ENCODE measurements at regions of chr13 and their contacts with region 1.

Region 1: GRCh38 chr13:77595166-77595810 is 59.8 kb downstream of the SCEL start:
- DNase-seq: no peak
- H3K4me3 Mint-ChIP-seq: no peak overlapping the region
- H3K27ac Mint-ChIP-seq: no peak overlapping the region
- H3K4me1 Mint-ChIP-seq: no peaks in the 10 kb centered on the region
- H3K27me3 Mint-ChIP-seq: peaks cover 20% of the 10 kb centered on the region
- CTCF ChIP-seq: no peak

Region 2: DNA sequence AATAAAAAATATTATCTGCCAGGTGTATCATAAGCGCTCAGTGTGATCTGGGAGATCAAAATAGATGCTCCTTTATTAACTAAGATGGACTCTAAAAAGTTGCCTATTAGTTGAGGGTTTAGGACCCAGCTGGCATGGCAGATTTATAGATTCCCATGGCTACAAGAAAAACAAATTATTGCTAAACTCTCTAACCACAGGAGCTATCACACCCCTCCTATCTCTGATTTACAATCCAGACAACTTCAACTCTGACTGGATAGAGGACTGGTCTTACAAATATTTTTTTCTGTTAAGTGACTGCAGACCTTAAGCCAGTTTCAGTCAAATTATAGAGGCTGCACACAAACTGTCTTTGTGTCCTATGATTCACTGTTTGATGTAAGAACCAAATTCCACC is 223.0 kb before region 1 on chr13:
- CTCF ChIA-PET with region 1: no interaction called
- POLR2A ChIA-PET with region 1: no interaction called
- intact Hi-C with region 1: no loop called
- DNase-seq: no peak
- H3K4me3 Mint-ChIP-seq: no peak overlapping the region
- H3K27ac Mint-ChIP-seq: no peak overlapping the region
- H3K4me1 Mint-ChIP-seq: no peaks in the 10 kb centered on the region
- H3K27me3 Mint-ChIP-seq: peaks cover 73% of the 10 kb centered on the region
- CTCF ChIP-seq: no peak

Region 3: DNA sequence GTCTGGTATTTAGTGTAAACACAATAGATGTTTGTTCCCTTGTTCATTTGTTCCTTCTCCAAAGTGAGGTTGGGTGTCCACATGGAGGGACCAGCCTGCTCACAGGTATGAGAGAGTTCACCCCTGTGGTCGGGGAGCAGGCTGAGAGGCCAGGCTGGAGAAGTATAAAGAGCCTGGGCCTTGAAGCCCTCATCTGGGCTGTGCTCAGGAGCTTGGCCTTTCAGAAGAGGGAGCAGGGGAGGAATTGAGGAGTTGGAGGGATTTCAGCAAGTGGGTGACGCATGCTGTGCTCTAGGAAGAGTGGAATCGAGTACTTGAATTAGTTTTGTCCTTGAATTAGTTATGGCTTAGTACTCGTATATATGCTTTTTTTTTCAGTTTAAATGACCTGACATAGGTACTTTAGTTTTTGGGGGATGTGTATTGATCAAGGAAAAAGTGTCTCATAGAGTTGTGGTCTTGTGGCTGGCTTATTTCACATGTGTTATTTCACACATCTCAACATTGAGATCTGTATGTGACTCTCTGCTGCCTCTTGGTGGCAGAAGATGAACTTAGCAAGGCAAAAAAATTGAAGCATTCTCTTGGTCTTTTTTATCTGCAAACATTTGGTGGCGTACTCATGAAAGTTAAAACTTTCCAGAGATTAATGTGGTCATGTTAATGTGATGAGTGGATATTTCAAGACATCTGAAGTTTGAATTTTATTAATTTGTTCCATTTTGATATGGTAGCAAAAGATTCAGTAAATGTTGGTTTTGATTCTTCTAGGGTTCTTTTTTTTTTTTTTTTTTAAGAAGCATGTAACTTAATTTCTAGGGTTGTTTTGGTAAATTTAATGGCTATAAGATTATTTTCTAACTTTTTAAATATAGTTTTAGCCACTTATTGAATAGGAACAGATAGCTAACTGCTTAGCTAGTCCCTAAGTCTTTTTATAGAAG is 156.5 kb after region 1 on chr13:
- CTCF ChIA-PET with region 1: interaction called, 20 read pairs
- POLR2A ChIA-PET with region 1: interaction called, 6 read pairs
- intact Hi-C with region 1: loop called (anchors 1 kb)
- DNase-seq: peak; percentile 67
- H3K4me3 Mint-ChIP-seq: no peak overlapping the region
- H3K27ac Mint-ChIP-seq: no peak overlapping the region
- H3K4me1 Mint-ChIP-seq: no peaks in the 10 kb centered on the region
- H3K27me3 Mint-ChIP-seq: peaks cover 86% of the 10 kb centered on the region
- CTCF ChIP-seq: peak; percentile 65

Measured in MCF 10A (cell line).